Activated naive CD4-positive, alpha-beta T cell treated with anti-CD3 and anti-CD28 coated beads for 36 hours (primary cell): ENCODE measurements at regions of chr4 and their contacts with region 1.

Region 1: GRCh38 chr4:76738086-76738931 is 159.6 kb downstream of the SOWAHB start:
- DNase-seq: peak; percentile 80
- H3K4me3 Mint-ChIP-seq: no peak overlapping the region
- H3K27ac Mint-ChIP-seq: peak overlapping the region; percentile 71
- H3K4me1 Mint-ChIP-seq: peaks cover 16% of the 10 kb centered on the region
- H3K27me3 Mint-ChIP-seq: no peaks in the 10 kb centered on the region

Region 2: DNA sequence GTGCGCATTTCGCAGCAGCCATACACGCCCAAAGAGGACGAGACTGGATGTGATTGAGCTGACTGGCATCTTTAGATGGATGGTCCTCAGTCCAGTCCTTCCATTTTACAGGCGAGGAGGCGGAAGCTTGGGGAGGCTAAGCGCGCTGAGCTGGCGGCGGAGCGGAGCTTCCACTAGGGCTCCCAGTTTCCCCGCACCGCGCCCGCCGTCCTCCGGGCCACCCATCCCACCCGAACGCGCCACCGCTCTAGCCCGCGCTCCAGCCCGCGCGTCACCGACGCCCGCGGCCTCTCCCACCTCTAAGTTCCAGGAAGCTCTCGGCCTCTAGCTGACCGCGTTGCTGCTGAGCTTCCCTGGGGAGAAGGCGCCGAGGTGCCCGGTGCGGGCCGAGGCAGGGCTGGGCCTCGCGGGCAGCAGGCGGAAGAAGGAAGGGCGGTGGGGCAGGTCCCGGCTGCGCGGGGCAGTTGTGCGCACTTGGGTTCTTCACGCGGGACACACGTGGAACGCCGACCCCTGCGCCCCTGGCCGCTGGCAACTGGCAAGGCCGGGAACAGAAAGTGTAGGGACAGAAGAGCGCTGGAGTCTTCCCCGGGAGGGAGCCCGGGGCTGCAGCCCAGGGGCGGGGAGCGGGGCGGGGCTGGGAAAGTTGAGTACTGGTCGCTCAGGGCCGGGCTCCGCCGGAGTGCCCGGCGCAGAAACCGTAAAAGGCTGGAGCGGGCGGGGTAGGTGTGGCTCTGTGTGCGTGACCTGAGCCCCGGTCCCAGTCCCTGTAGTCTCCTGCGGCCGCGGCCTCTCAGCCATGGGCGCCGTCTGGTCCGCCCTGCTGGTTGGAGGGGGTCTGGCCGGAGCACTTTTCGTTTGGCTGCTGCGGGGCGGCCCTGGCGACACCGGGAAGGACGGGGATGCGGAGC is 432.1 kb before region 1 on chr4 and contains the start of gene STBD1:
- CTCF ChIA-PET with region 1: no interaction called
- intact Hi-C with region 1: loop called (anchors 10 kb)
- DNase-seq: peak; percentile 19
- H3K4me3 Mint-ChIP-seq: peak within 1 kb of the TSS; percentile 72
- H3K27ac Mint-ChIP-seq: no peak within 1 kb of the TSS
- H3K4me1 Mint-ChIP-seq: peaks cover 17% of the 10 kb centered on the region
- H3K27me3 Mint-ChIP-seq: peaks cover 4% of the 10 kb centered on the region
- total RNA-seq, gene STBD1: not detected

Region 3: DNA sequence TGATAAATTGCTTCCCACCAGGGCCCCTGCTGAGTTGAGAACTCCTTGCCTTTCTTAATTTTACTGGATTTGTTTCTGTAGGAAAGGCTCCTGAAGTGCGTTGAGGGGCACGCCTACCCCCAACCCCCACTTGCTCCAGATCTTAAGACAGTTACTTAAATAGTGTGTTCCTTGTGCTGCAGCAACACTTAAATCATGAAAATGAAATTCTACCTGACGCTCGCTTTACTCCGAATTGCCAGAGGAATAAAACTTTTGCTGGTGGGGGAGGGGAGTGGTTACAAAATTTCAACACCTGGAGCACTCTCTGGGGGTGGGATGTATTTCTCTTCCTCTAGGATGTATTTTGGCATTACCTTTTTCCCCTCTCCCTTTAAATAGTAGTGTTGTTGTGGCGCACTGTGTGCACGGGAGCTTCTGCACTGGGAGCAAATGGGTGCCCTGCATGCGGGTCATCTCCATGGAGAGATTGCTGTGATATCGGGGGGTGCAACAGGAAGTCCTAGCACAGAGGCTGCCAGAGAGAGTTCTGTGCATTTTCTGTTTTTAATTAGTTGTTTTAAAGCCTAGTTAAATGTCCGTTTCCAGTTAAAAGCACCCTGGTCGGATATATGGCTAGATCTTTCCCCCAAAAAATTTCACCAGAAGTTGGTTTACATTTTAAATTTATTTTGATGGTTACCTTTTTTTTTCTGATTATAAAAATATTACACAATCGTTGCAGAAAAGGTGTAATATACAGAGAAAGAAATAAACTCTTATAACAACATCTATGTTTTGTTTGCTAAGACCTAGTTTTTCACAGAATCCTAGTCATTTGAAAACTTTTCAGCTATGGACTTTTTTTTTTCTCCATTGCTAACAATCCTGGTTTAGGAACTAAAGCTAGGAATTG is 48.1 kb before region 1 on chr4:
- CTCF ChIA-PET with region 1: no interaction called
- intact Hi-C with region 1: loop called (anchors 5 kb)
- DNase-seq: no peak
- H3K4me3 Mint-ChIP-seq: peak overlapping the region; percentile 56
- H3K27ac Mint-ChIP-seq: no peak overlapping the region
- H3K4me1 Mint-ChIP-seq: peaks cover 12% of the 10 kb centered on the region
- H3K27me3 Mint-ChIP-seq: peaks cover 62% of the 10 kb centered on the region

Region 4: GRCh38 chr4:76758290-76758882 is 20.1 kb after region 1 on chr4:
- CTCF ChIA-PET with region 1: no interaction called
- intact Hi-C with region 1: loop called (anchors 2 kb)
- DNase-seq: no peak
- H3K4me3 Mint-ChIP-seq: no peak overlapping the region
- H3K27ac Mint-ChIP-seq: no peak overlapping the region
- H3K4me1 Mint-ChIP-seq: peaks cover 11% of the 10 kb centered on the region
- H3K27me3 Mint-ChIP-seq: peaks cover 6% of the 10 kb centered on the region

Region 5: GRCh38 chr4:76787898-76788297 is 49.6 kb after region 1 on chr4:
- CTCF ChIA-PET with region 1: no interaction called
- intact Hi-C with region 1: no loop called
- DNase-seq: no peak
- H3K4me3 Mint-ChIP-seq: no peak overlapping the region
- H3K27ac Mint-ChIP-seq: no peak overlapping the region
- H3K4me1 Mint-ChIP-seq: no peaks in the 10 kb centered on the region
- H3K27me3 Mint-ChIP-seq: peaks cover 2% of the 10 kb centered on the region

Region 6: GRCh38 chr4:76836860-76837562 is 98.7 kb after region 1 on chr4:
- CTCF ChIA-PET with region 1: no interaction called
- intact Hi-C with region 1: no loop called
- DNase-seq: no peak
- H3K4me3 Mint-ChIP-seq: no peak overlapping the region
- H3K27ac Mint-ChIP-seq: no peak overlapping the region
- H3K4me1 Mint-ChIP-seq: no peaks in the 10 kb centered on the region
- H3K27me3 Mint-ChIP-seq: no peaks in the 10 kb centered on the region